ENCODE measurements at regions of chr7 and their contacts with region 1.

Region 1: DNA sequence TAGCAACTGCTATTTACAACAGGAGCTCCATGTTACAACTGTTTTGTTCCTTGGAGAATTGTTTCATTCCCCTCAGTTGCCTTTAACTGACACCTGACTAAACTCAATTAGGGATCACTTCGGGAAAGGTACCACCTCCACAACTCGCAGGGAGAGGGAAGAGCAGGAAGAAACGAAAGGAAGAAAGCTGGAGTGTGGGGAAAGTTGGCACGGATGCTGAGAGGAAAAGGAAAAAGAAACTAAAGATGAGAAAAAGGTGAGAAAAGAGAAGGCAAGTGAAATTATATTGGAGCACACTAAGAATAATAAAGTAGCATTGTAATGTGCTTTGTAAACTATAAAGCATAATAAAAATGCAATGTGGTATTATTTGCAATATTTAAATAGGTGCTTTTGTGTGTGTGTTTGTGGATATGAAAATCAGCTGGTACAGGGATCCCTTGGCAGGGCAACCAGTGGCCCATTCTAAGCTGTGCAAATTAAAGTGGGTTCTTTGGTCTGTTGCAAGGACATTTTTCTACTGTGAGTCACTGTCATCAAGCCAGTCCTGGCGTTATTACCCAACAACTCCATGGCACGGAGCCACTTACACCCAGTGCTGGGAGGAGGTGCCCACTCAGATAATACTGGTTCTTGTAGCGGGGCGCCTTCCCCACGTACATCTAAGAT is 45.9 kb downstream of the HIPK2 start:
- DNase-seq: peak; percentile 80 to 93 (median 84)
- ATAC-seq: peak; percentile 64 to 77 (median 76)
- H3K4me3 ChIP-seq: peak overlapping the region in 4 of 12 donors; percentile 6 to 19 (median 9)
- H3K27ac ChIP-seq: peak overlapping the region; percentile 76 to 97 (median 91)
- H3K4me1 ChIP-seq: peaks cover 42 to 96% (median 82%) of the 10 kb centered on the region in 12 donors
- H3K27me3 ChIP-seq: no peaks in the 10 kb centered on the region
- CTCF ChIP-seq: no peak
- POLR2A ChIP-seq: peak in 1 of 2 donors; percentile 34

Region 2: DNA sequence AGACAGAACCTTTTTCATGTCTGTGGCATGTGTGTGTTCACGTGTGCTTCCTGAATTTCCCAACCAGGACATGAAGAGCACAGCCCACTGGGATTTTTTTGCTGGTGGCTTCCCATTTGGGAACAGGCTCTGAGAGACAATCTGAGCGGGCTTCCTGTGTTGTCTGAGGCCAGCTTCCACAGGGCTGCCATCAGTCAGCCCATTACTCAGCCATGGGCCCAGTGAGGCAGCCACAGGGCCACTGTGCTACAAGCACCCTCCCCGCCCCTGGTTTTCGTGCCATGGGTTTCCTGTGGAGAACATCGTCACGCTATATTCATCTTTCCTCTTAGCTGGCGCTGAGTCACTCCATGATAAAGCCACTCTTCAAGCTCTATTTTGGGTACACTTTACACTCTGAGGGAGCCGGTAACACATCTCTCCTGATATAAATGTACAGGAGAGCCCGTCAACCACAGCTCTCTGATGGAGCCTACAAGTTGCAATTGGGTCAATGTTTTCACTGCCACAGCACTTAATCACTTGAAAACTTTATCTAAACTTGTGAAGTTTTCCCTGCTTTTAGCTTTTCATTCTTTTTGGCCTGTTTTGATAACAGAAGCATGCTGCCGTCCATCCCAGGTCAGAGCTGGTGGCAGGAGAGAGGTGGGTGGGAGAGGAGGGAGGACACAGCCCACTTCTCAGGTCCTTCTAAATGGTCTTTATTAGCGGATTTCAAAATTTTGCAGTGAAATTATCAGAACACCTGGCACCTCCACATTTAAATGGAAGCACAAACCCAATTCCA is 51.1 kb before region 1 on chr7:
- intact Hi-C with region 1: loop called in 1 of 10 experiments (anchors 5 kb)
- DNase-seq: peak; percentile 77 to 92 (median 78)
- ATAC-seq: peak; percentile 90 to 92 (median 92)
- H3K4me3 ChIP-seq: no peak overlapping the region
- H3K27ac ChIP-seq: peak overlapping the region; percentile 77 to 95 (median 88)
- H3K4me1 ChIP-seq: peaks cover 20 to 69% (median 54%) of the 10 kb centered on the region in 12 donors
- H3K27me3 ChIP-seq: no peaks in the 10 kb centered on the region
- CTCF ChIP-seq: no peak
- POLR2A ChIP-seq: peak in 1 of 2 donors; percentile 41

Region 3: DNA sequence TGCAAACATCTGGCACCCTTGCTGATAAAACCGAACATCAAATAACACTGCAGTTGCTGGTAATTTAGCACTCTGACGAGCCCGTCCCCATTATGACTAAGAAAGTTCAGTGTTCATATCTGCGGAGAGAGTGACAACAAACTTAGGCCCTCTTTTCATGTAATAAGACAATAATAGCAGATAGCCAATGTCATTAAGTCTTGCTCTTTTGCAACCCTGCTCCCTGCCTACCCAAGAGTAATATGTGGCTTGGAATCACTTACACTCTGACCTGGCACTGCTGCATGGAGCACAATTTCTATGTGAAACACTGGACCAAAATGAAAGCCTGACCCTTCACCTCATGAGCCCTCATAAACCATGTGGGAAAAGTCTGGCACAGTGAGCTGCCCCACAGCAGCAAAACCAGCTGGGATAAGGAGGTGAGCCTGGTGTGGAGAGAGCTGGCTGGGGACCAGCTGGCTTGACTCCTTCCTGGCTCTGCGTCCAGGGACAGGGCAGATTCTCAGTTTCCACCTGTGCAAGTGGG is 40.6 kb before region 1 on chr7:
- intact Hi-C with region 1: loop called in 1 of 10 experiments (anchors 5 kb)
- DNase-seq: peak; percentile 70 to 85 (median 81)
- ATAC-seq: peak; percentile 90 to 94 (median 92)
- H3K4me3 ChIP-seq: no peak overlapping the region
- H3K27ac ChIP-seq: peak overlapping the region in 11 of 12 donors; percentile 15 to 68 (median 52)
- H3K4me1 ChIP-seq: peaks cover 0 to 65% (median 27%) of the 10 kb centered on the region in 12 donors
- H3K27me3 ChIP-seq: no peaks in the 10 kb centered on the region
- CTCF ChIP-seq: no peak
- POLR2A ChIP-seq: no peak

Region 4: GRCh38 chr7:139811066-139811465 is 79.1 kb after region 1 on chr7:
- intact Hi-C with region 1: no loop called
- DNase-seq: no peak
- ATAC-seq: no peak
- H3K4me3 ChIP-seq: no peak overlapping the region
- H3K27ac ChIP-seq: no peak overlapping the region
- H3K4me1 ChIP-seq: no peaks in the 10 kb centered on the region
- H3K27me3 ChIP-seq: no peaks in the 10 kb centered on the region
- CTCF ChIP-seq: no peak
- POLR2A ChIP-seq: no peak

Measured in heart left ventricle (tissue), 16 donors.